ENCODE measurements at regions of chr17 and their contacts with region 1.

Region 1: DNA sequence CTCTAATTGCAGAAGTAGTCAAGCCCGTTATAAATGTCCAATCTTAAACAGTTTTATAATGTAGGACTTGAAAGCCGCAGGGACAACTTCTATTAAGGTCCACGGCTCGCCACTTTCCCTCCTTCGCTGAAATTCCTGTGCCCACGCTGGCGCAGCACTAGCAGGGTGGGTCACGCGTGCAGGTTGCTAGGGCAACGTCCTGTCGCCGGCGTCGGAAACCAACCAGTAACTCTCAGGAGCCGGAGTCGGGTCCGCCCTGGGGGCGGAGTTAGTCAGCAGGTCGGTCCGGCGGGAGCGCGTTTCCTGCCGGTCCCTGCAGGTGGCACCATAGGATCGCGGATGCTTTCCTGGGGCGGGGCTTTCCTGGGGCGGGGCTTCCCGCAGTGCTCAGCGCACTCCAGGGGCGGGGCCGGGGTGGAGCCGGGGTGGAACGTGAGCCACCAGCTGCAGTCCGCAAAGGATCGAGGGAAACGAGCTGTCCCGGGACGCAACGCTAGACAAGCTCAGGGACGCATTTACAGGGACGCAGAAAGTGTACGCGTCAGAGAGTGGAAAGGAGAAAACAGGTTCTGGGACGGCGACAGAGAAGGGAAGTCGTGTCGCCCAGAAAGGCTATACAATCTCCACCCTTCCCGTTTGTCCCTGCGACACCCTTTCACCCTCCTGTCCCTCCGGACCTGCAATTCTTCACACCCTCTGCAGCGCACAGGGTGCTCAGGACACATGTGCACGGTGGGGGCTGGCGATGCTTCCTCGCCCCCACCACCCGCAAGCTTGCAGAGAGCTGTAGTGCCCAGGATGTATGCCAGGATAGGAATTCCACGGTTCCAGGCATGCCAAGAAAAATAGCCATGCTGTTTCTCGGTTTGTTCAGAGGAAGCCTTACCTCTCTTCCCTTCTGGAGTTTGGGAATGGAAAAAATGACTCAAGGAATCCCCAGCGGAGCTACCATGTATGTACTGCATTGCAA is 12.4 kb downstream of the COPZ2 start:
- DNase-seq: peak; percentile 94
- ATAC-seq: peak; percentile 82
- H3K4me3 ChIP-seq: peak overlapping the region; percentile 52 to 77 (median 57)
- H3K27ac ChIP-seq: no peak overlapping the region
- H3K4me1 ChIP-seq: peaks cover 41% of the 10 kb centered on the region
- H3K27me3 ChIP-seq: peaks cover 4 to 27% of the 10 kb centered on the region in 2 experiments
- CTCF ChIP-seq: peak; percentile 99
- EP300 ChIP-seq: 0 out of 4 replicates have a peak, but pooled peaks of 1 of the 2 experiments have one; percentile 40
- POLR2A ChIP-seq: no peak
- RAD21 ChIP-seq: peak; percentile 99

Region 2: GRCh38 chr17:48011405-48012150 is 13.6 kb before region 1 on chr17:
- CTCF ChIA-PET with region 1: no interaction called
- POLR2A ChIA-PET with region 1: no interaction called
- in situ Hi-C with region 1: no loop called
- intact Hi-C with region 1: no loop called
- DNase-seq: peak; percentile 38
- ATAC-seq: peak; percentile 70
- H3K4me3 ChIP-seq: peak overlapping the region in 2 of 3 experiments; percentile 24 to 58; a peak in 3 of 6 replicates
- H3K27ac ChIP-seq: no peak overlapping the region
- H3K4me1 ChIP-seq: peaks cover 23% of the 10 kb centered on the region
- H3K27me3 ChIP-seq: peaks cover 10 to 56% of the 10 kb centered on the region in 2 experiments; a peak in 4 of 5 replicates
- CTCF ChIP-seq: peak; percentile 58
- EP300 ChIP-seq: no peak
- POLR2A ChIP-seq: no peak
- RAD21 ChIP-seq: no peak

Region 3: DNA sequence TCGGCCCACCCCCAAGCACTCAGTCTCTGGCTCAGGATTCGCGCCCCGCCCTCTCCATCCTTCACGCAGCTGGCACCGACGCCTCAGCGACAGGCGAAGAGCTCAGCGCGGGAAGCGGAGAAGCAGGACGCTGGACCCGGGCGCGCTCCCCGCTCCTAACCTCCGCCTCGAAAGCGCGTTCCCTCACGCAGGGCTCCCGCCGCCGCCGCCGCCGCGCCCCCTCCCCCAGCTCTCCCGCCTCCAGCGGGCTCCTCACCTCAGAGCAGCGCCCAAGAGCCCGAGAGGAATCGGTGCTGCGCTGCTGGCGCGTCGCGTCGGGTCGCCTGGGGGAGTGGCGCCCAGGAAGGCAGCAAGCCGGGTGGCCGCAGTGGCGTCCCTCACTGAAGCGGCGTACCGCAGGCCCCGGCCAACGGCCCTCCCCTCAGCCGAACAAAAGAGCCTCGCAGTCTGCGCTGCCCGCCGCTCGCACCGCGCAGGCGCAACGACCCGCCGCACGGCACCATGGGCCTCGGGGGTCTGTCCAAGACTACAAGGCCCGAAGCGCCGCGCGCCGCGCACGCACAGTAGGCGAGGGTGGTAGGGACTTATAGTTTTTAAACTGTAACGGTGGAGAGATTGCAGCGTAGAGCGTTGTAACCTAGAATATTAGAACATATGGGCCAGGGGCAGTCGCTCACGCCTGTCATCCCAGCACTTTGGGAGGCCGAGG is 75.9 kb after region 1 on chr17 and contains the start of gene CBX1:
- CTCF ChIA-PET with region 1: interaction called, 8 read pairs
- POLR2A ChIA-PET with region 1: no interaction called
- in situ Hi-C with region 1: no loop called
- intact Hi-C with region 1: loop called (anchors 2 kb)
- DNase-seq: peak; percentile 93
- ATAC-seq: peak; percentile 96
- H3K4me3 ChIP-seq: peak within 1 kb of the TSS; percentile 90
- H3K27ac ChIP-seq: peak within 1 kb of the TSS; percentile 84
- H3K4me1 ChIP-seq: peaks cover 27% of the 10 kb centered on the region
- H3K27me3 ChIP-seq: no peaks in the 10 kb centered on the region
- CTCF ChIP-seq: peak; percentile 30
- EP300 ChIP-seq: peak; percentile 30 to 39; a peak in 1 of 4 replicates
- POLR2A ChIP-seq: peak; percentile 69 to 91
- RAD21 ChIP-seq: peak; percentile 49; the same call in 1 of the 2 replicates
- total RNA-seq, gene CBX1: 108 and 143 TPM in 2 replicates

Region 4: GRCh38 chr17:48374650-48375230 is 349.5 kb after region 1 on chr17:
- CTCF ChIA-PET with region 1: no interaction called
- POLR2A ChIA-PET with region 1: no interaction called
- in situ Hi-C with region 1: loop called (anchors 10 kb)
- intact Hi-C with region 1: no loop called
- DNase-seq: peak; percentile 49
- ATAC-seq: peak; percentile 93
- H3K4me3 ChIP-seq: no peak overlapping the region
- H3K27ac ChIP-seq: no peak overlapping the region
- H3K4me1 ChIP-seq: peaks cover 6% of the 10 kb centered on the region; the same call in 1 of the 2 replicates
- H3K27me3 ChIP-seq: peaks cover 0 to 6% of the 10 kb centered on the region in 2 experiments; a peak in 1 of 5 replicates
- CTCF ChIP-seq: peak; percentile 65
- EP300 ChIP-seq: no peak
- POLR2A ChIP-seq: no peak
- RAD21 ChIP-seq: peak; percentile 73

Region 5: GRCh38 chr17:48610282-48611211 is 585.3 kb after region 1 on chr17 and contains the start of gene HOXB7:
- CTCF ChIA-PET with region 1: no interaction called
- POLR2A ChIA-PET with region 1: no interaction called
- in situ Hi-C with region 1: loop called (anchors 5 kb)
- intact Hi-C with region 1: loop called (anchors 5 kb)
- DNase-seq: no peak
- ATAC-seq: peak; percentile 44
- H3K4me3 ChIP-seq: peak within 1 kb of the TSS; percentile 19 to 72 (median 45); a peak in 5 of 6 replicates
- H3K27ac ChIP-seq: no peak within 1 kb of the TSS
- H3K4me1 ChIP-seq: peaks cover 23% of the 10 kb centered on the region
- H3K27me3 ChIP-seq: peaks cover 21 to 95% of the 10 kb centered on the region in 2 experiments; a peak in 4 of 5 replicates
- CTCF ChIP-seq: 0 out of 2 replicates have a peak, but pooled peaks have one; percentile 3
- EP300 ChIP-seq: no peak
- POLR2A ChIP-seq: no peak
- RAD21 ChIP-seq: no peak
- total RNA-seq, gene HOXB7: not detected in 2 replicates